Activated CD8-positive, alpha-beta T cell treated with anti-CD3 and anti-CD28 coated beads for 36 hours (primary cell): ENCODE measurements at regions of chr7 and their contacts with region 1.

Region 1: DNA sequence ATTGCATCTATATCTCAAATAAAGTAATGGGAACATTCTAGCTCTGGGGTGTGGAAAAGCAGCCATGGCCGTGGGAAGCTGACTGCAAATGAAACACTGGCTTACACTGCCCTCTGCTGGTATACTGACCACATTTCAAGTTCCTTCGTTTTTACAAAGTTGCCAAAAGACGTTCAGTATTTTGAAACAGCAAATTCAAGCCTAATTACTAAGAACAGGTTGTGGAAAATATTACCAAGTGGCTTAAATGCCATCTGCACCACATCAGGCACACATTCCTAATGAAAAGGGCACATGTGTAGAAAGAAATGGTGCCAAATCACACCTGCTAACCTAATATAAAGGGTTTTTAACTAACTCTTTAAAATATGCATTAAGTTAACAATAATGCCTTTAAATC is 83.9 kb downstream of the JAZF1 start:
- DNase-seq: peak; percentile 48
- ATAC-seq: peak; percentile 73
- H3K4me3 Mint-ChIP-seq: no peak overlapping the region
- H3K27ac Mint-ChIP-seq: no peak overlapping the region
- H3K4me1 Mint-ChIP-seq: peaks cover 9% of the 10 kb centered on the region
- H3K27me3 Mint-ChIP-seq: no peaks in the 10 kb centered on the region
- CTCF ChIP-seq: peak; percentile 95

Region 2: DNA sequence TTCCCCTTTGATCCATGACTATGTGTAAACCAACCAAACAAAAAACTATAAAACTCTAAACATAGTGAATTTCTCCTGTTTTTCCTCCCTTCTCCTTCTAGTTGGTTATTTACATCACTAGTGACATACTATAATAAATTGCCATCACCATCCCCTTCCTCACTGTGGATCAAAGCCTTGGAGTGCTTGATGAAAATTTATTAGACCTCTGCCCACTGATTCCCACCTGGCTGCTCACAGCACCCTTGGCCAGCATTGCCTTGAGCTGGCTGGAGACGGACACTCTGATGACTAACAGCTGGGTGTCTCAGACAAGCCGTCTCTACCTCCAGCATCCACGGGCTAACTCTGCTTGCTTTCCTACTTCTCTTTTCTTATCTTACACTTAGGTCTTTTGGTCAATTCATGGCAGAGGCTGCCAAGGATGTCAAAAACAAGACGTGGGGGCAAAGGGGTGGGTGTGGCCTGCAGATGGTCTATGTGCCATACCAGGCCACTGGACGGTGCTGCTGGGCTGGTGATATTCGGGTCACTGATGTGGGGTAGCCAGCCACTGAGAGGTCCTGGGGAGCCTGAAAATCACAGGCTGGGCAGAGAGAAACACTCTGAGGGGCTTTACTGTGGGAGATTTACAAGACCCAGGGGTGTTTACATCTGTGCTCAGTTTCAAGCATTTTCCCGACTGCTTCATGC is 149.0 kb before region 1 on chr7:
- CTCF ChIA-PET with region 1: no interaction called
- POLR2A ChIA-PET with region 1: no interaction called
- intact Hi-C with region 1: no loop called
- DNase-seq: no peak
- ATAC-seq: no peak
- H3K4me3 Mint-ChIP-seq: no peak overlapping the region
- H3K27ac Mint-ChIP-seq: no peak overlapping the region
- H3K4me1 Mint-ChIP-seq: peaks cover 11% of the 10 kb centered on the region
- H3K27me3 Mint-ChIP-seq: no peaks in the 10 kb centered on the region
- CTCF ChIP-seq: no peak

Region 3: GRCh38 chr7:28052933-28053332 is 43.8 kb before region 1 on chr7:
- CTCF ChIA-PET with region 1: interaction called, 16 read pairs
- POLR2A ChIA-PET with region 1: no interaction called
- intact Hi-C with region 1: no loop called
- DNase-seq: no peak
- ATAC-seq: no peak
- H3K4me3 Mint-ChIP-seq: no peak overlapping the region
- H3K27ac Mint-ChIP-seq: no peak overlapping the region
- H3K4me1 Mint-ChIP-seq: peaks cover 6% of the 10 kb centered on the region
- H3K27me3 Mint-ChIP-seq: no peaks in the 10 kb centered on the region
- CTCF ChIP-seq: no peak

Region 4: DNA sequence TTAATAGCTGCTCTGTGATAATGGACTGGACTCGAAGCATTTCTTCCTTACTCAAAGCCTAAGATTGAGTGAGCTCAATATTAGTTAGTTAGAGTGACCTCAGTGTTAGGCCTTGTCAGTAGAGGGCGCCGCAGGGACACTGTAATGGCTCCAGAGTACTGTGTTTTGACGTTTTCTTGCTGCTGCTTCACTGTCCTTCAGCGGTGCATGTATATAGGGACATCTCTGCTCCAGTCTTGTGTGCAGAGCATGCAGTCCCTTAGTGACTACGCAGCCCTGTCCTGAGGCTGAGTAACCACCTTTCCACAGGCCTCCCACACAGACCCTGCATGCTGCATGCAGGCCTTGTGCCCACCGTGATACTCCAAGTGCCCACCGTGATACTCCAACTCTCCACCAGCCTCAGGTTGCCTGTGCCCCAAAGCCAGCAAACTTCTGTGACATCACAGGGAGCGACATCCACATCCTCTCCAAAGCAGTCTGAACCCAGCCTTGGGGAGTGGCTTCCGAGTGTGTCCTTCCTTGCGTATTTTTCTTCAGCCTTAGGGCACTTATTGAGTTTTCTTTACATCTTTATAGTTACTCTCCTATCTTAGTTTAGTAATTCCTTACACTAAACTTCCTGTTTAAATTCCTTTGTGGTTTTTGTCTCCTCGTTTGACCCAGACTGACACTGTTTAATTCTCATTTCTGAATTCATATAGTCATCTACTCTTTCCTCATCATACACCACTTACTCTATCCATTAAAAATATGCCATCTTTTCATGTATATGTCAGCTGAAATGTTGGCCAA is 34.3 kb before region 1 on chr7:
- CTCF ChIA-PET with region 1: interaction called, 23 read pairs
- POLR2A ChIA-PET with region 1: no interaction called
- intact Hi-C with region 1: no loop called
- DNase-seq: peak; percentile 81
- ATAC-seq: peak; percentile 79
- H3K4me3 Mint-ChIP-seq: no peak overlapping the region
- H3K27ac Mint-ChIP-seq: no peak overlapping the region
- H3K4me1 Mint-ChIP-seq: peaks cover 4% of the 10 kb centered on the region
- H3K27me3 Mint-ChIP-seq: peaks cover 2% of the 10 kb centered on the region
- CTCF ChIP-seq: peak; percentile 42

Region 5: GRCh38 chr7:28069807-28070206 is 26.9 kb before region 1 on chr7:
- CTCF ChIA-PET with region 1: interaction called, 15 read pairs
- POLR2A ChIA-PET with region 1: no interaction called
- intact Hi-C with region 1: no loop called
- DNase-seq: no peak
- ATAC-seq: no peak
- H3K4me3 Mint-ChIP-seq: no peak overlapping the region
- H3K27ac Mint-ChIP-seq: no peak overlapping the region
- H3K4me1 Mint-ChIP-seq: peaks cover 2% of the 10 kb centered on the region
- H3K27me3 Mint-ChIP-seq: no peaks in the 10 kb centered on the region
- CTCF ChIP-seq: no peak

Region 6: GRCh38 chr7:28078036-28078901 is 18.4 kb before region 1 on chr7:
- CTCF ChIA-PET with region 1: interaction called, 78 read pairs
- POLR2A ChIA-PET with region 1: interaction called, 4 read pairs
- intact Hi-C with region 1: no loop called
- DNase-seq: peak; percentile 62
- ATAC-seq: peak; percentile 76
- H3K4me3 Mint-ChIP-seq: no peak overlapping the region
- H3K27ac Mint-ChIP-seq: no peak overlapping the region
- H3K4me1 Mint-ChIP-seq: no peaks in the 10 kb centered on the region
- H3K27me3 Mint-ChIP-seq: no peaks in the 10 kb centered on the region
- CTCF ChIP-seq: peak; percentile 92

Region 7: DNA sequence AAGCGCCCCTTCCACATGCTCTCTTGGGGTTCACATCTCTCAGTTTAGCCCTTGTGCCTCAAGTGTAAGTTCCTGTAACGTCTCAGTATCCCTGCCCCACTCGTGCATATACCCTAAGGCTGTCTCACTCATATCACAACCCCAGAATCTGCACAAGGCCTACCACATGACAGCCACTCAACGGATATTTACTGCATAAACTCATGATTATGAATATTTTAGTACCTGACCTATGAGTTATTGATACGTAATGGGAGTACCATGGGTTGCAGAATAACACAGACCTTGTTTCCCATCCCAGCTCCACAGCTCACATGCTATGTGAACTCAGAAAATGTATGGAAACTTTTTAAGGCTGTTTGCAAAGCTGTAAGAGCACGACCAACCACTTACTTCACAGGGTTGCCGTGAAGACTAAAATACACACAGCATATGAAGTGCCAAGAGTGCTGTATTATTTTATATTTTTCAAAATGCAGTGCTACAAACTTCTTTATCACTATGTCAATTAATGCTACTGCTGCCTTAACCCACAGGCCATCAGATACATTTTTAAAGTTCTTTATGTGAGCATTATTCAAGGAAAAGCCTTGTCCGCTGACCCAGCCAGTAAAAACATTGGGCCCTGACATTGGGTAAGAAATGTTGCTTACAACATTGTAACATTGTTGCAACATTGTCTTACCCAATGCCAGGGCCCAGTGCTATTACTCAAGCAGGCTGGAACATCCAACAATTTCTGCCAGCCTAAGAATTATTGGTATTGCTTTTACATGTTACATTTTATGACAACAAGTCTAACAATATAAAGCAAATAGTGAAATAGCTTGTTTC is 13.3 kb before region 1 on chr7:
- CTCF ChIA-PET with region 1: interaction called, 78 read pairs
- POLR2A ChIA-PET with region 1: interaction called, 4 read pairs
- intact Hi-C with region 1: no loop called
- DNase-seq: no peak
- ATAC-seq: no peak
- H3K4me3 Mint-ChIP-seq: no peak overlapping the region
- H3K27ac Mint-ChIP-seq: no peak overlapping the region
- H3K4me1 Mint-ChIP-seq: peaks cover 2% of the 10 kb centered on the region
- H3K27me3 Mint-ChIP-seq: no peaks in the 10 kb centered on the region
- CTCF ChIP-seq: no peak

Region 8: DNA sequence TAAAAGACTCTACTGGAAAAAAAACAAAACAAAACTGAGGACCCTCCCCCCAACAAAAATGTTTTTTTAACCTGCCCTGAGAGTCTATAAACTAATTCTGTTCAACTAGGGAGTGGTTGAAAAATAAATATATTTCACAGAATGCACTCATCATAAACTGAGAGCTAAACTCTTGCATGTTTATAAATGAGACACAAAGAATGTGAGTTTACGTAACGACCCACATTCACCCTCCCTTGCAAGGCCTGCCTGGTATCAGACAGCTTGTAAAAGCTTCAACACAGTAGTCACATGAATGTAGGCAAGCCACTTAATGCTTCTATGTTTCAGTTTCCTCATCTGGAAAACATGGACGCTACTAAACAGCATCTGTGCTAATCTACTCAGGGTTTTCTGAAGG is 33.6 kb after region 1 on chr7:
- CTCF ChIA-PET with region 1: interaction called, 17 read pairs
- POLR2A ChIA-PET with region 1: no interaction called
- intact Hi-C with region 1: no loop called
- DNase-seq: no peak
- ATAC-seq: no peak
- H3K4me3 Mint-ChIP-seq: no peak overlapping the region
- H3K27ac Mint-ChIP-seq: no peak overlapping the region
- H3K4me1 Mint-ChIP-seq: peaks cover 10% of the 10 kb centered on the region
- H3K27me3 Mint-ChIP-seq: no peaks in the 10 kb centered on the region
- CTCF ChIP-seq: no peak

Region 9: DNA sequence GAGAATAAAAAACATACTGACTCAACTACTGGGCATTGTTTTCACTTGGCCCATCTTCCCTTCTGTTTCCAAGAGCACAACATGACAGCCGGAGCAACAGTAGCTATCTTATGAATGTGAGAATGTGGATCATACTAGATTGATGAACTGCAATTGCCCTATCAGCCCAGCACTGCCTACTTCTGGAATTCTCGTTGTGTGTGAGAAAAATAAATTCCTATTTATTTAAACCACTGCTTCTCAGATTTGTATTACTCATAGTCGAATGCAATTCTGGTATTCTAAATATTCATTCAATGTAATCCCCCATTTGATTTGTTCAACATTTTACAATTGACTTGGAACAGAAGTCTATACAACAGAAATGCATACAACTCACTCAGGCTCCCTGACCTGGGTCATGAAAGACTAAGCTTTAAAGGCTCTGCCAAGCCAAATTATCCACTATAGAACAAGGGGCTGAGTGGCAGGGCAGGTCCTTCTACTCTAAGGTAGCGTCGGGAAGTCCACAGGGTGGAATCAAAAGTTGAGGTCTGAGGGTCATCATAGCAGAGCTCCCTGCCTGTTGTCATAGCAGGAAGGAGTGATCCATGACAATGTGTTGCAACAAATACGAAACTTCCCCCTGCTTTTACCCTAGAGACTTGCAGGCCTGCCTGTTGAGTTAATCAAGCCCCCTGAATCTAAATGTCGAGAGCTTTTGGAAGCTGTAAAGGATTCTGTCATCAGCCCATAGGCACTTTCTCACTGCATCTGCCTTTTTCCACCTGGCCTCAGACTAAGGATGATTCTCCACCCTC is 96.3 kb after region 1 on chr7:
- CTCF ChIA-PET with region 1: no interaction called
- POLR2A ChIA-PET with region 1: no interaction called
- intact Hi-C with region 1: no loop called
- DNase-seq: no peak
- ATAC-seq: no peak
- H3K4me3 Mint-ChIP-seq: no peak overlapping the region
- H3K27ac Mint-ChIP-seq: no peak overlapping the region
- H3K4me1 Mint-ChIP-seq: peaks cover 10% of the 10 kb centered on the region
- H3K27me3 Mint-ChIP-seq: peaks cover 8% of the 10 kb centered on the region
- CTCF ChIP-seq: no peak